Activated CD8-positive, alpha-beta T cell treated with anti-CD3 and anti-CD28 coated beads for 36 hours (primary cell): ENCODE measurements at regions of chr22 and their contacts with region 1.

Region 1: GRCh38 chr22:50562523-50563412 is at the start of gene SYCE3:
- DNase-seq: peak; percentile 98
- ATAC-seq: peak; percentile 99
- H3K4me3 Mint-ChIP-seq: peak within 1 kb of the TSS; percentile 83
- H3K27ac Mint-ChIP-seq: peak within 1 kb of the TSS; percentile 47
- H3K4me1 Mint-ChIP-seq: peaks cover 15% of the 10 kb centered on the region
- H3K27me3 Mint-ChIP-seq: no peaks in the 10 kb centered on the region
- CTCF ChIP-seq: peak; percentile 82
- total RNA-seq, gene SYCE3: not detected

Region 2: DNA sequence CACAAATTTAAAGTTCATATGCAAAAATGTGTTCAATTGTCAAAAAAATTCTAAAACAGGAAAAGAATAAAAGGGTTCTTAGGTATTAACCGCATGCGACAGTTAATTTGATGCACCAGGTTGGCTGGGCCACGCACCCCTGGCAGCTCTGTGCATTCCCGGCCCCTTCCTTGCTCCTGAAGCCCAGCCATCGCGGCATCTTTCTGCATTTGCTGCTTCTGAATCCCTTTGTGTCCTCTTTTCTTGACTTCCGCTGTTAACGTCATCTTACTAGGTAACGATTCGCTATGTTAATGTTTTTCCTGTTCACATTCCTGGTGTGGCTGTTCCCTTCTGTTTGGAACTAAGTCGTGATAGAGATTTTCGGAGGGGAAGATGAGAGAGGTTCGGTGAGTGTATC is 25.0 kb before region 1 on chr22:
- CTCF ChIA-PET with region 1: interaction called, 29 read pairs
- POLR2A ChIA-PET with region 1: interaction called, 13 read pairs
- intact Hi-C with region 1: no loop called
- DNase-seq: no peak
- ATAC-seq: no peak
- H3K4me3 Mint-ChIP-seq: no peak overlapping the region
- H3K27ac Mint-ChIP-seq: peak overlapping the region; percentile 100
- H3K4me1 Mint-ChIP-seq: peaks cover 60% of the 10 kb centered on the region
- H3K27me3 Mint-ChIP-seq: no peaks in the 10 kb centered on the region
- CTCF ChIP-seq: no peak

Region 3: GRCh38 chr22:50544078-50544745 is 18.6 kb before region 1 on chr22:
- CTCF ChIA-PET with region 1: interaction called, 32 read pairs
- POLR2A ChIA-PET with region 1: interaction called, 36 read pairs
- intact Hi-C with region 1: no loop called
- DNase-seq: peak; percentile 93
- ATAC-seq: peak; percentile 59
- H3K4me3 Mint-ChIP-seq: peak overlapping the region; percentile 38
- H3K27ac Mint-ChIP-seq: peak overlapping the region; percentile 80
- H3K4me1 Mint-ChIP-seq: peaks cover 58% of the 10 kb centered on the region
- H3K27me3 Mint-ChIP-seq: no peaks in the 10 kb centered on the region
- CTCF ChIP-seq: peak; percentile 73

Region 4: DNA sequence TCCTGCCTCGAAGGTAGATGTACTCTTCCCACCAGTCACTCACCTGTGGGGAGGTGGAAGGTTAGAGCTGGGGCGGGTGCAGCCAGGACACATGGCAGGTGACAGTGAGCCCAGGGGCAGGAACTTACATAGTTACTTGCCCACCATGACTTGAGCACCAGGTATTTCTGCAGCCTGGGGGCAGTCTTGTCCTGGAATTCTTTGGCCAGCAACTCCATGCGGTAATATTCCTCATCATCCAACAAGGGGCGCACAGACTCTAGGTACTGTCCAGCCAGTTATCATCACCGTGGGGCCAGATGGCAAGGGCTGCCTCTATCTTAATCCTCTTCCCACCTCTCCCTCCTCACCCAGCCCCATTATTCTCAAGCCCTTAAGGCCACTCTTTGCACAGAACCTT is 13.3 kb after region 1 on chr22:
- CTCF ChIA-PET with region 1: interaction called, 18 read pairs
- POLR2A ChIA-PET with region 1: interaction called, 12 read pairs
- intact Hi-C with region 1: no loop called
- DNase-seq: no peak
- ATAC-seq: no peak
- H3K4me3 Mint-ChIP-seq: no peak overlapping the region
- H3K27ac Mint-ChIP-seq: no peak overlapping the region
- H3K4me1 Mint-ChIP-seq: peaks cover 9% of the 10 kb centered on the region
- H3K27me3 Mint-ChIP-seq: no peaks in the 10 kb centered on the region
- CTCF ChIP-seq: no peak

Region 5: DNA sequence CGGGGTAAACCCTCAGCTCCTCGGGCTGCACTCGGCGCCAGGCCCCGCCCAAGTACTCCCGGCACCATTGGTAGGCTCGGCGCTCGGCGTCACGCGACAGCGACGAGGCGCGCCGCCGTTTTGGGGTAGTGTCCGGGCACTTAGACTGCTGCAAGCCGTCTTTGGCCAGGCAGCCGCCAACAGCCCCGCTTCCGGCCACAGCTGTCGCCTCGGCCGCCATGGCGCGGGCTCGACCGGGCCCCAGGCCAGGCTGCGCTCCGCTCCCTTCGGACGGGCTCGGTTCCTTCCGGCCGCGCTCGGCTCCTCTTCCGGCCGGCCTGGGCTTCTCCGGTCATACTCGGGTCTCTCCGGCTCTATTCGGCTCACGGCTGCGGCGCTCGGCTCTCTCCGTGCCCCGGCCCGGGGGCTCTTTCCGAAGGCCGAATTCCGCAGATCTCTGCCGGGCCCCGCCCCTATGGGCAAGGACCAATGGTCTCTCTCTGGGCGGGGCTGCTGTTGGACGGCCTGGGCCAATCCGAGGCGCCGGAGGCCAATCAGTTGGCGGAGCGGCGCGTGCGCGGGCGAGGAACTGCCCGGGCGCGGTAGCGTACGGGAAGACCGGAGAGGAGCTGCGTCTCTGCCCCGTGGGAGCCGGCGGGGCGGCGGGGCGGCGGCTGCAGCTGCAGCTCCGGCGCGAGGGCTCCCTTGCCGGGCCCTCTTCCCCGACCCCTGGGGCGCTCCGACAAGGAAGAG is 20.0 kb after region 1 on chr22 and contains the start of gene CHKB:
- CTCF ChIA-PET with region 1: interaction called, 18 read pairs
- POLR2A ChIA-PET with region 1: interaction called, 12 read pairs
- intact Hi-C with region 1: no loop called
- DNase-seq: peak; percentile 99
- ATAC-seq: peak; percentile 97
- H3K4me3 Mint-ChIP-seq: peak within 1 kb of the TSS; percentile 92
- H3K27ac Mint-ChIP-seq: peak within 1 kb of the TSS; percentile 89
- H3K4me1 Mint-ChIP-seq: peaks cover 24% of the 10 kb centered on the region
- H3K27me3 Mint-ChIP-seq: no peaks in the 10 kb centered on the region
- CTCF ChIP-seq: no peak
- total RNA-seq, gene CHKB: 55.6 to 60.3 TPM